Tibial artery (tissue), 4 donors: ENCODE measurements at regions of chr3 and their contacts with region 1.

Region 1: DNA sequence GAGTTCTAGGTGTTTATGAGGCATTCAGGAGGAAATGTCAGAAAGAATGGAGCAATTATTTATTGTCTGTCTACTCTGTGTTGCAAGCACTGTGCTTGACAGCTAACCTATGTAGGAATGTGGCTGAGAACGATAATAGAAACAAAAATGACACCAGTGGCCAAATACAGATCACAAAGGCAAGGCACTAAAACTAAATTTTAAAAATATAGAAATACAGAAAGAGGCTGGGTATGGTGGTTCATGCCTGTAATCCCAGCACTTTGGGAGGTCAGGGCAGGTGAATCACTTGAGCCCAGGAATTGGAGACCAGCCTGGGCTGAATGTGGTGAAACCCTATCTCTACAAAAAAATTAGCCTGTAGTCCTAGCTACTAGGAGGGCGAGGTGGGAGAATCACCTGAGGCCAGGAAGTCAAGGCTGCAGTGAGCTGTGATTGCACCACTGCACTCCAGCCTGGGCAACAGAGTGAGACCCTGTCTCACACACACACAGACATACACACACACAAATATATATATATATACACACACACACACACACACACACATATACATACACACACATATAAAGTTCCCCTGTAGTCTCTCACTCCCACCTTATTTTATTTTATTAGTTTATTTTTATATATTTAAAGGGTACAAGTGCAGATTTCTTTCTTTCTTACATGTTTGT is 6.0 kb downstream of the PRKCI start:
- DNase-seq: no peak
- H3K4me3 ChIP-seq: no peak overlapping the region
- H3K27ac ChIP-seq: peak overlapping the region; percentile 13 to 24
- H3K4me1 ChIP-seq: peaks cover 0 to 63% (median 25%) of the 10 kb centered on the region in 4 donors
- H3K27me3 ChIP-seq: no peaks in the 10 kb centered on the region
- CTCF ChIP-seq: no peak

Region 2: DNA sequence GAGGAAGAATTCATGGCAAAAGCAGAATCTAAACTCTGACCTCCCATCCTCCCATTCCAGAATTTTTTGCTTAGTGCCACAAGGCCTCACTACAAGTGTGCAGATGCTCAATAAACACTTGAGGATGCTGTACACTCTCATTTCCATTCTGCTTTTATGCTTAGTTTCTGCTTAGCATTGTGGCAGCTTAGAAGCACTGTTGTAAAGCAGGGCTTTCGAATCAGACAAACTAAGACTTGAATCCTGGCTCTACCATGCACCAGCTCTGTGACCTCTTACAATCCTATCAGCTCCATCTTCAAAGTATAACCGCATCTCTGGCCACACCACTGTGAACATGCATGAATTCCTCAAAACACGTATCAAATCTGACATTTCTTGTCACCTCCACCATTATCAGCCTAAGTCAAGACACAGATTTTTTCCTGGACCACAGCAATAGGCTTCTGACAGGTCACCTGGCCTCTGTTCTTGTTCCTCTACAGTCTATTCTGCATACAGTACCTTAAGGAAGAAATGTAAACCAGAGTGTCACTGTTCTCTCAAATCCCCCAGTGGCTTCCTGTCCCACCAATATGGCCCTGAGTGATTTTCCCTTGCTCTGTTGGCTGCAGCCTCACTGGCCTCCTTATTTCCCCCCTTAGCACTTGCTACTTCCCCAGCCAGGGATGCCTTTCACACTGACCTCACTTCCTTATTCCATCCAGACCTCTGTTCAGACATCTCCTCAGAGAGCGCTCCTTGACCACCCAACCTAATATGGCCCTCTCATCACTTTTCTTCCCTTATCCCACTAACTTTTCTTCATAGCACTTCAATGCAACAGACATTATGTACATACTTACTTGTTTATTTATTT is 38.6 kb before region 1 on chr3:
- intact Hi-C with region 1: loop called (anchors 5 kb)
- DNase-seq: no peak
- H3K4me3 ChIP-seq: no peak overlapping the region
- H3K27ac ChIP-seq: no peak overlapping the region
- H3K4me1 ChIP-seq: peaks cover 0 to 5% (median 0%) of the 10 kb centered on the region in 4 donors
- H3K27me3 ChIP-seq: no peaks in the 10 kb centered on the region
- CTCF ChIP-seq: no peak